Right ventricle myocardium inferior (tissue), 1 donor: ENCODE measurements at regions of chr1 and their contacts with region 1.

Region 1: GRCh38 chr1:112998592-112999235 is 42.7 kb upstream of the SLC16A1 start:
- DNase-seq: peak; percentile 80
- ATAC-seq: peak; percentile 85

Region 2: GRCh38 chr1:112982853-112983536 is 15.7 kb before region 1 on chr1:
- intact Hi-C with region 1: loop called (anchors 2 kb)
- DNase-seq: no peak
- ATAC-seq: peak; percentile 90

Region 3: DNA sequence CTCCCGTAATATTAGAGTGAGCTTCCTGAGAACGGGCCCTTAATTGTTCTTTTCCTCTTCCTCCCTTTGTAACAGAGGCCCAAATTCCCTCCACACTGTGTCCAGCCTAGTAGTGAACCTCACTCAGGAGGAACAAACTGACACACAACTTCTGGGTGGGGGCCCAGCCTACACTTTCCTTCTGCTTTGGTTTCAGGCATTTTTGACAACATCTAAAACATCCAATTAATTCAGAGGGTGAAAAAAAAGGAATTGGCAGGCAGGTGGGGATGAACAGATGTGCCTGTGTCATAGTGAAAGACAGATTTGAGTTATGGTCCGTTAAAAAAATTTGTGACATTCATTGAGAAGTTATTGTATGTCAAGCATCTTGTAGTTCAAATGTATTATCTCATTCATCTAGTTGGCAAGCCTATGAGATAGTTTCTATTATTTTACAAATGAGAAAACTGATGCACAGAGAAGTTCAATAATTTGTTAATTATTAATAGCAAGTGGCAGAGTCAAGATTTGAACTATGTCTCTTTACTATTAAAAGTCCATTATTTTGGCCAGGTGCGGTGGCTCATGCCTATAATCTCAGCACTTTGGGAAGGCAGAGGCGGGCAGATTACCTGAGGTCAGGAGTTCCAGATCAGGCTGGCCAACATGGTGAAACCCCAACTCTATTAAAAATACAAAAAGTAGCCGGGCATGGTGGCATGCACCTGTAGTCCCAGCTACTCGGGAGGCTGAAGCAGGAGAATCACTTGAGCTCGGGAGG is 32.6 kb after region 1 on chr1:
- intact Hi-C with region 1: loop called (anchors 2 kb)
- DNase-seq: no peak
- ATAC-seq: no peak